Activated T-helper 2 cell treated with anti-CD3 and anti-CD28 coated beads, Interferon-gamma antibody, Interleukin-2, Interleukin-4, amounts not matched to agents 10 μg/mL and 5 μg/mL and 100 μg/mL, durations not matched to agents 14 hours and 24 hours and 36 hours (primary cell): ENCODE measurements at regions of chr15 and their contacts with region 1.

Region 1: GRCh38 chr15:59751552-59752413 is 62.7 kb upstream of the BNIP2 start:
- DNase-seq: no peak
- H3K4me3 Mint-ChIP-seq: no peak overlapping the region
- H3K27ac Mint-ChIP-seq: no peak overlapping the region
- H3K4me1 Mint-ChIP-seq: peaks cover 11% of the 10 kb centered on the region
- H3K27me3 Mint-ChIP-seq: peaks cover 20% of the 10 kb centered on the region

Region 2: GRCh38 chr15:59605994-59606393 is 145.8 kb before region 1 on chr15:
- intact Hi-C with region 1: no loop called
- DNase-seq: no peak
- H3K4me3 Mint-ChIP-seq: no peak overlapping the region
- H3K27ac Mint-ChIP-seq: no peak overlapping the region
- H3K4me1 Mint-ChIP-seq: no peaks in the 10 kb centered on the region
- H3K27me3 Mint-ChIP-seq: peaks cover 21% of the 10 kb centered on the region

Region 3: DNA sequence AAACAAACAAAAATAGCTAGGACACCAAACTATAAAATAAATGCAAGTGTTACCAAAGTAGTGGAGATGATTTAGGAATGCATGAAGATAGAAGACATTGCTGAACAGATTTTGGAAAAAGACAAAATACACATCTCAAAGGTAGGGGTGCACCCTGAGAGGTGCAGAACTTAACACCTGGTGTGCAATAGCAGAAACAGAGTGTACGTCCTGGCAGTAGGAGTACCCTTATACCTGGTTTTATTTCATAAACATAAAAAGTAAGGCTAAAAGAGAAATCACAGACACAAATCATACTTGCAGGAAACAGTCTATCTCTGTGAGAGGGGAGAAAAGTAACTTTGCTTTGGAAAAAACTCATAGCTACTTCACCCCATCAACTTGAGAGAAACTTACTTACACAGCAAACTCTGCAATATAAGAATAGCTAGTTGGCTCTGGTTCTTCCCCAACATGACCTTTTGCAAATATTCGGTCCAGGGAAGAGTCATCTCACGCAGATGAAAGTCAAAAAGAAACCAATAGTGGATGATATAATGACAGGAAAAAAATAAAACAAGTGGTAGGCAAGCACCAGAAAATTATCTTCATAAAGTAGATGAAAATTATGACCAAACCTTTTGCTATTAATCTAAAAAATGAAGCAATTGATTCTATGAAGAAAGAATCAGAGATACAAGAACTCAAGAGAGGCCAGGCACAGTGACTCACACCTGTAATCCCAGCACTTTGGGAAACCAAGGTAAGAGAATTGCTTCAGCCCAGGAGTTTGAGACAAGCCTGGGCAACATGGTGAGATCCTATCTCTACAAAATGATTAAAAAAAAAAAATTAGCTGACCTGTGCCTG is 46.2 kb after region 1 on chr15:
- intact Hi-C with region 1: loop called (anchors 1 kb)
- DNase-seq: no peak
- H3K4me3 Mint-ChIP-seq: no peak overlapping the region
- H3K27ac Mint-ChIP-seq: peak overlapping the region; percentile 25
- H3K4me1 Mint-ChIP-seq: peaks cover 37% of the 10 kb centered on the region
- H3K27me3 Mint-ChIP-seq: peaks cover 26% of the 10 kb centered on the region

Region 4: GRCh38 chr15:59814409-59814808 is 62.6 kb after region 1 on chr15:
- intact Hi-C with region 1: no loop called
- DNase-seq: no peak
- H3K4me3 Mint-ChIP-seq: no peak overlapping the region
- H3K27ac Mint-ChIP-seq: no peak overlapping the region
- H3K4me1 Mint-ChIP-seq: peaks cover 12% of the 10 kb centered on the region
- H3K27me3 Mint-ChIP-seq: peaks cover 31% of the 10 kb centered on the region